ENCODE measurements at regions of chr6 and their contacts with region 1.

Region 1: GRCh38 chr6:158402184-158402583 is 89.9 kb downstream of the TULP4 start:
- DNase-seq: no peak
- ATAC-seq: no peak
- H3K4me3 Mint-ChIP-seq: no peak overlapping the region
- H3K27ac Mint-ChIP-seq: no peak overlapping the region
- H3K4me1 Mint-ChIP-seq: no peaks in the 10 kb centered on the region
- H3K27me3 Mint-ChIP-seq: no peaks in the 10 kb centered on the region

Region 2: DNA sequence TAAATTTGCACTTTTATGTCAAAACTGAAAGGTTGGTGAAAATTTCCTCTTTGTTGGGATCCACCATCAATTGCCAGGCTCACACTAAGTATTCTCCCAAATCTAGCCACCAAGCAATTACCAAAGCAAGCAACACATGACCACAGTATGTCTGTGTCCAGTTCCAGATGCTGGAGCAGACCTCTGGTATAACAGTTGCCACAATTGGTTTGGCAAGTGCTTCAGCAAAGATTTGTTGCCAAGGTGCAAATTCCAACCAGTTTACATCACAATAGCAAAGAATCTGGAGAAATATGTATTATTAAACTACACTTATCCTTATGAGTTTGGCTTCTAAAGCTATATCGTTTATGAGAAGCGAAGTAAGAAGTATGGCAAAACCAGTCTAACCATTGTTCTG is 227.7 kb before region 1 on chr6:
- CTCF ChIA-PET with region 1: no interaction called
- DNase-seq: no peak
- ATAC-seq: no peak
- H3K4me3 Mint-ChIP-seq: no peak overlapping the region
- H3K27ac Mint-ChIP-seq: no peak overlapping the region
- H3K4me1 Mint-ChIP-seq: no peaks in the 10 kb centered on the region
- H3K27me3 Mint-ChIP-seq: no peaks in the 10 kb centered on the region

Region 3: GRCh38 chr6:158377860-158378259 is 24.3 kb before region 1 on chr6:
- CTCF ChIA-PET with region 1: no interaction called
- DNase-seq: no peak
- ATAC-seq: no peak
- H3K4me3 Mint-ChIP-seq: no peak overlapping the region
- H3K27ac Mint-ChIP-seq: no peak overlapping the region
- H3K4me1 Mint-ChIP-seq: no peaks in the 10 kb centered on the region
- H3K27me3 Mint-ChIP-seq: no peaks in the 10 kb centered on the region

Region 4: GRCh38 chr6:158417760-158418098 is 15.5 kb after region 1 on chr6:
- CTCF ChIA-PET with region 1: interaction called, 10 read pairs
- DNase-seq: no peak
- ATAC-seq: no peak
- H3K4me3 Mint-ChIP-seq: no peak overlapping the region
- H3K27ac Mint-ChIP-seq: no peak overlapping the region
- H3K4me1 Mint-ChIP-seq: no peaks in the 10 kb centered on the region
- H3K27me3 Mint-ChIP-seq: no peaks in the 10 kb centered on the region

Measured in activated CD8-positive, alpha-beta memory T cell treated with anti-CD3 and anti-CD28 coated beads, Interleukin-2, amount 10 ng/mL, durations not matched to agents 7 days and 5 days (primary cell).